ENCODE measurements at regions of chr15 and their contacts with region 1.

Region 1: DNA sequence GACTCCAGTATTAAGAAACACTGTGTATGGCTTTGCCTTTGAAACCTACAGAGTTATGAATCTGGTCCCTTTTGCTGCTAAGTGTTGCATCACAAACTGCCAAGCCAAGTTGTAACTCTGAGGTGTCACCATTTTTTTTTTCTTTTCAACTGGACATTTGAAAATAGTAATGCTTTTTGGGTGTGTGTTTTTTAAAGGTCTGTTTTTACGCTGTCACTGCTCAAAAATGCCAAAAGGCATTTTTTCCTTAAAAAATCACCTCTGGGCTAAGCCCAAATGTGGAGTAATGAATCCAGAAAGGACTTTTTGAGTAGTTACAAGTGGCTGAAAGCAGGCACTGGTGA is 9.5 kb downstream of the SMAD3 start:
- DNase-seq: no peak
- ATAC-seq: no peak
- H3K4me3 Mint-ChIP-seq: peak overlapping the region; percentile 54
- H3K27ac Mint-ChIP-seq: peak overlapping the region; percentile 62
- H3K4me1 Mint-ChIP-seq: peaks cover 94% of the 10 kb centered on the region
- H3K27me3 Mint-ChIP-seq: no peaks in the 10 kb centered on the region
- CTCF ChIP-seq: no peak

Region 2: DNA sequence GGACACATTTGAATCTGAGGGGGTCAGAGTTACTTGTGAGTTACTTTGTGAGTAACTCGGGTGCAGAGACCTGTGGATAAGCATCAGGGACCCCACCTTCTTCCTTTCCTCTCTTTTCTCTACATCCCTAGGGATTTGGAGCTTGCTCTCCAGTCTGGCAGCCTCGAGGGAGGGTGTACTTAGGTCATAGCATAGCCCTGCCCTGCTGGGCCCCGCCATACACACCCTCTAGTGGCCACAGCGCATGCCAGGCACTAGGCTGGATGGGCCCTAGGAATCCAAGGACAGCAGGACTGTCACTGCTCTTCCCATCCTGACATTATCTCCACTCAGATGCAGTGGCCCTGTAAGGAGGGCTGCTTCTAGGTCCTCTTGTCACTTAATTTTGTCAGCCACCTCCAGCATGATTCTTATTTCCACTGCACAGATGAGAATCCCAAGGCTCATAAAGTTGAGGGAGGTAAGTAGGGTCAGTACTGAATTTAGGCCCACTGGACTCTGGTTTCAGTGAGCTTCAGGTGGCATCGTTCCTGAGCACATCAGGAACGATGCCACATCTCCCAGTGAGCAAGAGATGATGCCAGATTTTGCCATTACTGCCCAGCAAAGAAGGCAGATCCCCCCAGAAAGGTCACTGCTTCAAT is 376.4 kb before region 1 on chr15:
- CTCF ChIA-PET with region 1: no interaction called
- POLR2A ChIA-PET with region 1: no interaction called
- intact Hi-C with region 1: no loop called
- DNase-seq: no peak
- ATAC-seq: no peak
- H3K4me3 Mint-ChIP-seq: no peak overlapping the region
- H3K27ac Mint-ChIP-seq: no peak overlapping the region
- H3K4me1 Mint-ChIP-seq: peaks cover 35% of the 10 kb centered on the region
- H3K27me3 Mint-ChIP-seq: peaks cover 5% of the 10 kb centered on the region
- CTCF ChIP-seq: no peak

Region 3: DNA sequence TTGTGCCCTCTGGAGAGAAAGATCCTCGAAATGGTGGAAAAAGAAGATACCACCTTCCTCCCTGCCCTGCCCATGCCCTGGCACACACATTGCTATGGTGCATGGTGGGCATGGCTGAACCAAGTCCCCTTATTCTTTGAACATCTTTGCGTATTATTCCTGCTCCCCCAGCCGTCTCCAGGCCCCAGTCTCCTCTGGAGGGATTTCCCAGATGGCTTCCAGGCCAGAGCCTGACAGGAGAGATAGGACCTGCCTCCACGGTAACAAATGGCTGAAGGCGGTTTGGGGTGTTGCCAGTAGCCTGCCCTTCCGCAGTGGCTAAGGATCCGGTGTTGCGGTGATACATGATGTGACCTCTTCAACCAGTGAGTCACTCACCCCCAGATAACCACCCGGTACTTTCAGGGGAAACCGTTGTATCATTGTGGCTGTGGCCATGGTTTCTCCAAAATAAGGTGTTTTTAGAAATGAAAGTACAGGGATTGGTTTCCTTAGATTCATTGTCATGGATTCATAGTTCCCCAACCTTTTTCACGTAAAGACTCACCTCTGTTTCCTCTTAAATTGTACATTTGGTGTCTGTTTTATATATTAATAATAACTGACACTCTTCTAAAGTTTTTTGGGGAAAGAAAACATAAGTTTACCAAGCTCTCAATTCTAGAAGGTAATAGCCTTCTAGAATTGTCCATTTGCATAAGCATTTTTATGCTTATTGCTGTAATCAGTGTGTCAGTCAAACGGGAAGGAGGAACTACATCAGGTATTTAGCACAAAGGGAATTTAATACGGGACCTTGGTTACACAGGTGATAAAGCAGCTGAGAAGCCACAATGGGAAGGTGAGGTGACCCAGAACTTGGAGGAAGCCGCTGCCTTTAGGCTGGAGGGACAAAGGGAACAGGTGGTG is 16.5 kb after region 1 on chr15:
- CTCF ChIA-PET with region 1: interaction called, 70 read pairs
- POLR2A ChIA-PET with region 1: interaction called, 427 read pairs
- intact Hi-C with region 1: no loop called
- DNase-seq: no peak
- ATAC-seq: peak; percentile 46
- H3K4me3 Mint-ChIP-seq: peak overlapping the region; percentile 74
- H3K27ac Mint-ChIP-seq: peak overlapping the region; percentile 95
- H3K4me1 Mint-ChIP-seq: peaks cover 100% of the 10 kb centered on the region
- H3K27me3 Mint-ChIP-seq: no peaks in the 10 kb centered on the region
- CTCF ChIP-seq: no peak

Region 4: DNA sequence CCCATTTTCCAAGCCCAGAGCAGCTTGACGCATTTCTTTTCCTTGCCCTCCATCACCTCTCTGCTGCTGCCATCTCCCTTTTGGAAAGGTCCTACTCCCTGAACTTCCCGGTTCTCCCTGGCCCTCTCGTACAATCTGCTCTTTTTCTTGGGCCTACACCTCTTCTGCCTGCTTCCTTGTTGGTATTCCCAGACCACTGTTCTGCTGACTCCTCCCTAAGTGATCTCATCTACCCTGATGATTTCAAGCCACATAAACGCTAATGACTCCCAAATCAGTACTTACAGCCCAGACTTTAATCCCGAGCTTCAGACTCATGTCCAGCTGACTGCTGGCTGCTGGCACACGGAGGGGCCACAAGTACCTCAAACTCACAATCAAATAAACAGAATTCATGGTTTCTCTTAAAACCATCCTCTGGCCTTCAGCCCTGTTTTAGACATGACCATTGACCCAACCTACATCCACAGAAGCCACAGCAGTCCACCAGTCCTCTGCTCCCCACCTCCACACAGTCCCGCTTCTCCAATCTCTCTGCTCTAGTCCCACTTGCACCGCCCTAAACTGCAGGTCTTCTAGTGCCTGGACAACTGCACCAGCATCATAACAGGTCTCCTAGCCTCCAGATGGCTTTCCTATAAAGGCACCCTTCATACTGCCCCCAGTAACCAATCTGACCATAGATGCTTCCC is 122.0 kb after region 1 on chr15:
- CTCF ChIA-PET with region 1: no interaction called
- POLR2A ChIA-PET with region 1: no interaction called
- intact Hi-C with region 1: no loop called
- DNase-seq: no peak
- ATAC-seq: no peak
- H3K4me3 Mint-ChIP-seq: no peak overlapping the region
- H3K27ac Mint-ChIP-seq: peak overlapping the region; percentile 27
- H3K4me1 Mint-ChIP-seq: peaks cover 21% of the 10 kb centered on the region
- H3K27me3 Mint-ChIP-seq: no peaks in the 10 kb centered on the region
- CTCF ChIP-seq: no peak